ENCODE measurements at regions of chr7 and their contacts with region 1.

Region 1: DNA sequence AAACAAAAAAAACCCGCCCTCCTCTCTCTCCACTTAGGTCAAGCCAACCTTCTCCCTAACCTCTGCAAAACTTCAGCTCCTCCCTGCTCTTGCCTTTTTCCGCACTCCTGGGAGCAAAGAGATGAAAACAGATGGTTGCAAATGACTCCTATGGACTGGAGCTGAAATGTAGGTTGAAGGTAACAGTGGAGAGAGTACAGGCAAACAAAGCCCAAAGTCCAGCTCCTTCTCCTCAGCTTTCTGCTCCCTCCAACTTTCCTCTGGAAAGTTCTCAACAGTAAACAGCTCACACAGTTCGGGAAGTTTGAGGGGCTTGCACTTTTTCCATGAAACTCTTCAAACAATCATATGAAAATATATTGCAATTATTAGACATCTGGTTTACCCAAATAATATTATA is 90.3 kb downstream of the SLC37A3 start:
- DNase-seq: no peak
- H3K4me3 Mint-ChIP-seq: no peak overlapping the region
- H3K27ac Mint-ChIP-seq: no peak overlapping the region
- H3K4me1 Mint-ChIP-seq: peaks cover 19% of the 10 kb centered on the region
- H3K27me3 Mint-ChIP-seq: peaks cover 2% of the 10 kb centered on the region

Region 2: GRCh38 chr7:140326116-140326928 is 18.3 kb after region 1 on chr7:
- CTCF ChIA-PET with region 1: interaction called, 10 read pairs
- POLR2A ChIA-PET with region 1: no interaction called
- DNase-seq: peak; percentile 67
- H3K4me3 Mint-ChIP-seq: no peak overlapping the region
- H3K27ac Mint-ChIP-seq: peak overlapping the region; percentile 20
- H3K4me1 Mint-ChIP-seq: no peaks in the 10 kb centered on the region
- H3K27me3 Mint-ChIP-seq: no peaks in the 10 kb centered on the region